Heart left ventricle (tissue), 16 donors: ENCODE measurements at regions of chr20 and their contacts with region 1.

Region 1: DNA sequence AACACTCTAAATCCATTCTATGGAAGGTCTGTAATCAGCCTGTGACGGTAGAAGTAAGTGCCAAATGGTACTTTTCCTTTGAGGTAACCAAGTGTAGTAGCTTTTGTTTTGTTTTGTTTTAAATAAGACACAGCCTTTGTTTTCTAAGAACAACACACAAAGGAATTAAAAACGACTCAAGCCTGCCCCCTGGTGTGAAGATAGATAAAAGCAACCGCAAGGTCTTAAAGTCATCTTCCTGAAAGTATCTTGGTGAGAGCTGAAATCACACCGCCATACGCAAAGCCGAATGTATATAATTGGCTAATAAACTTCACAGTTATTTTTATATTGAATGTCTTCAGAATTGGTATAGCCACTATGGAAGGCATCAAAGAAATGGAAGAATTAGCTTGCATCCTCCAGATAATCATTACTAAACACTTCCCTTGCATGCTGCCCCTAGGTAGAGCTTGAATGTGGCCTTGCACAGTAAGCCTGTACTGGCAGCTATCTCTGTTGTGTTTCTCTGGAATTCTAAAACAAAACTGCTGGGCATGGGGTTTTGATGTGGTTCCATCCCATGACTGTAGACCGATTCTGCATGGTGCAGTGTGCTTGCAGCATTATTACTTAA is 95.6 kb downstream of the LAMP5 start:
- DNase-seq: peak in 4 of 5 donors; percentile 28 to 47 (median 36)
- ATAC-seq: no peak
- H3K4me3 ChIP-seq: no peak overlapping the region
- H3K27ac ChIP-seq: no peak overlapping the region
- H3K4me1 ChIP-seq: no peaks in the 10 kb centered on the region
- H3K27me3 ChIP-seq: peaks cover 0 to 13% (median 0%) of the 10 kb centered on the region in 9 donors
- CTCF ChIP-seq: peak; percentile 55 to 81 (median 73)
- POLR2A ChIP-seq: no peak

Region 2: DNA sequence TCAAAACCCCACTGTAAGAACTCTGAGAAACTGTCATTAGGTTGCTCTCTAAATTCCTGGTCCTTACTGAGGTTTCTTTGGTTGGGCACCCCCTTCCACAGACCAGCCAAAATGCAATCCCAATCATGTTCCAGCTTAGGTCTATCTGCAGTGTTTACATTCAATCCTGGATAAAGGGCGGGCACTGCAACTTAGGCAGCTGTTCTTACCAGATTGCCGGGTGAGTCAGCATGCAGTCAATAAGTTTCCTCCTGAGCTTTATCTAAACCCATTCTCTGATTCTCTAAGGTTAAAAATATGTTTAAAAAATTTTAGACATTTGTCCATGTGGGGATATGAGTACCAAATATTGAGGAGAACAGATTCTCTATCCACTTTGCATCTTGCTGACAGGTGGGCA is 1867.5 kb before region 1 on chr20:
- intact Hi-C with region 1: no loop called
- DNase-seq: no peak
- ATAC-seq: no peak
- H3K4me3 ChIP-seq: no peak overlapping the region
- H3K27ac ChIP-seq: no peak overlapping the region
- H3K4me1 ChIP-seq: no peaks in the 10 kb centered on the region
- H3K27me3 ChIP-seq: no peaks in the 10 kb centered on the region
- CTCF ChIP-seq: no peak
- POLR2A ChIP-seq: no peak

Region 3: GRCh38 chr20:8749986-8750385 is 860.0 kb before region 1 on chr20:
- intact Hi-C with region 1: loop called in 6 of 10 experiments (anchors 5 to 10 kb)
- DNase-seq: no peak
- ATAC-seq: no peak
- H3K4me3 ChIP-seq: no peak overlapping the region
- H3K27ac ChIP-seq: no peak overlapping the region
- H3K4me1 ChIP-seq: peaks cover 0 to 11% (median 0%) of the 10 kb centered on the region in 12 donors
- H3K27me3 ChIP-seq: no peaks in the 10 kb centered on the region
- CTCF ChIP-seq: no peak
- POLR2A ChIP-seq: no peak

Region 4: DNA sequence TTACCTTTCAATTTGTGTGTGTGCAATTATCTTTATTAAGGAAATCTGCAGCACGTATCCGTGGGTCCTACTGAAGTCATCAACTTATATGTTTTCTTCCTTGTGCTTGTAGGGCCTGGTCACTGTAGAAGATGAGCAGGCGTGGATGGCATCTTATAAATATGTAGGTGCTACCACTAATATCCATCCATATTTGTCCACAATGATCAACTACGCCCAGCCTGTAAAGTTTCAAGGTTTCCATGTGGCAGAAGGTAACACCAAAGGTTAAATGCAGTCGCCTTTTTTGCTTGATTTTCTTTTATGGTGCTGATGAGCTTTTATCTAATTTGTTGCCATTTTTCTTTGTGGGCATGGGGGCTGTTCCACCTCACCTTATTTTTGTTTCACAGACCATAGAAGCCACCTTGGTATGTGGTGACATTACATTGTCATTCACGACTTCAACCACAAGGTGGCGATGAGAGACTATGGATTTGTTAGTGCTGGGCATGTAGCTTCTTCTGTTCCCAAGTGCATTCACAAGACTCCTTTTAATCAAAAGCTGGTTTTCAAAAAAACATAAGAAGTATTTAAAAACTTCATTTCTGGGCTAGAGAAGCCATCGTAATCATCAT is 202.1 kb before region 1 on chr20:
- intact Hi-C with region 1: loop called (anchors 1 to 5 kb)
- DNase-seq: peak in 3 of 5 donors; percentile 32 to 47 (median 33)
- ATAC-seq: peak in 3 of 4 donors; percentile 81 to 82 (median 81)
- H3K4me3 ChIP-seq: no peak overlapping the region
- H3K27ac ChIP-seq: no peak overlapping the region
- H3K4me1 ChIP-seq: peaks cover 0 to 7% (median 0%) of the 10 kb centered on the region in 12 donors
- H3K27me3 ChIP-seq: no peaks in the 10 kb centered on the region
- CTCF ChIP-seq: peak; percentile 70 to 90 (median 84)
- POLR2A ChIP-seq: no peak

Region 5: DNA sequence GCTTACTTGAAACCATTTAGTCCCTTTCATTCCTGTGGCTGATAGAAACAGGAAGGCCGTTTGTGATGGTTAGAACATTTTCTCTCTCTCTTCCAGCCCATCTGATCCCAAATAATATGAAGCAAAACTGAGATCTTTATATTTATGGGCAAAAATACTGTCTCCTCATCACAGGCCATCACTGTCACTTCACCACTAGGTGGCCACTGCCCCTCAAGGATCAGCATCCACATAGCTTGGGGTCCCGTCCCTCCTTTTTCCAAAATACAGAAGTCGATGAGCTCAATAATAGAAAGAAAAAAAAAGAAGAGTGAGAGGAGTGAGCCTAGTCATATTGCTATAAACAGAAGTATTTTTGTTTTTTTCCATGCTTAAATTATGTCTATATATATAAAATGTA is 142.0 kb before region 1 on chr20:
- intact Hi-C with region 1: loop called in 2 of 10 experiments (anchors 5 to 10 kb)
- DNase-seq: no peak
- ATAC-seq: no peak
- H3K4me3 ChIP-seq: no peak overlapping the region
- H3K27ac ChIP-seq: no peak overlapping the region
- H3K4me1 ChIP-seq: no peaks in the 10 kb centered on the region
- H3K27me3 ChIP-seq: no peaks in the 10 kb centered on the region
- CTCF ChIP-seq: peak in 10 of 12 donors; percentile 16 to 48 (median 38)
- POLR2A ChIP-seq: no peak

Region 6: GRCh38 chr20:9550871-9551270 is 59.1 kb before region 1 on chr20:
- intact Hi-C with region 1: no loop called
- DNase-seq: no peak
- ATAC-seq: no peak
- H3K4me3 ChIP-seq: no peak overlapping the region
- H3K27ac ChIP-seq: no peak overlapping the region
- H3K4me1 ChIP-seq: no peaks in the 10 kb centered on the region
- H3K27me3 ChIP-seq: no peaks in the 10 kb centered on the region
- CTCF ChIP-seq: no peak
- POLR2A ChIP-seq: no peak

Region 7: DNA sequence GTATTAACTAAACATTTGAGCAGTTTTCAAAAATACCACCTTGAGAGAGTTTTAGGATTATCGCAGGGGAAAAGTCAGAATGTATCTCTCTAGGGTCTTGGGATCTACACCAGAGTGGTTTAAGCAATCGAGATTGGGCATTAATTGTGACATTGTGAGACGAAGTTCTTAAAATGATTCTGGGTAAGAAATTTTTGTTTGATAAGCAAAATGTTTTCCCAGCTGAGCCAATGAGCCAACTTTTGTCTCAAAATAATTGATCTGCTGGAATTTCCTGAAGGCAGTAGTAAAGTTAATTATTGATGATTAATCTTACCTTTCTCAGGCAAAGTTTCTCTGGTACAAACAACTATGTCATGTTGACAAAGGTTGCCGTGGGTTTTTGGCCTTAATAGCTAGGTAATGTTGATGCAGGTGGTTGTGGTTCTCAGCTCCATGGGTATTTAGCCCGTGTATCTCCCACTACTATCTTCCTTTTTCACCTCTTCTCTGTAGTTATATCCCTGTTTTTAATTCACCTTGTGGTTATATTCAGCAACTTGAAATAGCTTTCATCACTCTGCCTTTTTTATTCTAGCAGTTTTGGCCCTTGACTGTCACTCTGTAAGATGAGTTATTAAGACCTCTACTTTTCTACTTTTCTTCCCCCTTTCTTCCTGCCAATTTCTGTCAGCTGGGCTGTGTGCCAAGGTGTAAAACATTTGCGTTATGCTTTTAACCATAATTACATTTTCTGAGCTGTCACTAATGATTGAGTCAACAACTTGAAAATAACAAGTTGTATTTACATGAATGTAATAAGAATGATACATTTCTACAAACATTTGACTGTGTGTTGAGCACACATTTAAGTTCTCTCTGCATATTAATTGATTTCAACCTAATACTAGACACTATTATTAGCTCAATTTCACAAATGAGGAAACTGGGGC is 1939.4 kb after region 1 on chr20:
- intact Hi-C with region 1: loop called in 8 of 10 experiments (anchors 5 to 10 kb)
- DNase-seq: no peak
- ATAC-seq: no peak
- H3K4me3 ChIP-seq: no peak overlapping the region
- H3K27ac ChIP-seq: no peak overlapping the region
- H3K4me1 ChIP-seq: peaks cover 0 to under 1% (median 0%) of the 10 kb centered on the region in 12 donors
- H3K27me3 ChIP-seq: peaks cover 0 to 4% (median 0%) of the 10 kb centered on the region in 9 donors
- CTCF ChIP-seq: no peak
- POLR2A ChIP-seq: no peak